HCT116 (cell line): ENCODE measurements at regions of chr12 and their contacts with region 1.

Region 1: GRCh38 chr12:72017054-72017651 is 78.5 kb downstream of the TPH2 start:
- DNase-seq: peak; percentile 85
- ATAC-seq: peak; percentile 98
- H3K4me3 ChIP-seq: no peak overlapping the region
- H3K27ac ChIP-seq: no peak overlapping the region
- H3K4me1 ChIP-seq: no peaks in the 10 kb centered on the region
- H3K27me3 ChIP-seq: no peaks in the 10 kb centered on the region
- CTCF ChIP-seq: peak; percentile 62 to 82 (median 80)
- POLR2A ChIP-seq: no peak
- RAD21 ChIP-seq: peak; percentile 86

Region 2: GRCh38 chr12:72063073-72063472 is 45.9 kb after region 1 on chr12:
- CTCF ChIA-PET with region 1: no interaction called
- POLR2A ChIA-PET with region 1: no interaction called
- RAD21 ChIA-PET with region 1: no interaction called
- intact Hi-C with region 1: no loop called
- DNase-seq: no peak
- ATAC-seq: no peak
- H3K4me3 ChIP-seq: no peak overlapping the region
- H3K27ac ChIP-seq: no peak overlapping the region
- H3K4me1 ChIP-seq: no peaks in the 10 kb centered on the region
- H3K27me3 ChIP-seq: no peaks in the 10 kb centered on the region
- CTCF ChIP-seq: no peak
- POLR2A ChIP-seq: no peak
- RAD21 ChIP-seq: no peak

Region 3: GRCh38 chr12:72264548-72265175 is 247.5 kb after region 1 on chr12:
- CTCF ChIA-PET with region 1: interaction called, 9 read pairs
- POLR2A ChIA-PET with region 1: no interaction called
- RAD21 ChIA-PET with region 1: no interaction called
- intact Hi-C with region 1: loop called (anchors 5 kb)
- DNase-seq: no peak
- ATAC-seq: peak; percentile 64; the same call in 1 of the 2 replicates
- H3K4me3 ChIP-seq: no peak overlapping the region
- H3K27ac ChIP-seq: no peak overlapping the region
- H3K4me1 ChIP-seq: no peaks in the 10 kb centered on the region
- H3K27me3 ChIP-seq: no peaks in the 10 kb centered on the region
- CTCF ChIP-seq: peak; percentile 37 to 61 (median 57); a peak in 5 of 6 replicates
- POLR2A ChIP-seq: no peak
- RAD21 ChIP-seq: peak; percentile 55

Region 4: DNA sequence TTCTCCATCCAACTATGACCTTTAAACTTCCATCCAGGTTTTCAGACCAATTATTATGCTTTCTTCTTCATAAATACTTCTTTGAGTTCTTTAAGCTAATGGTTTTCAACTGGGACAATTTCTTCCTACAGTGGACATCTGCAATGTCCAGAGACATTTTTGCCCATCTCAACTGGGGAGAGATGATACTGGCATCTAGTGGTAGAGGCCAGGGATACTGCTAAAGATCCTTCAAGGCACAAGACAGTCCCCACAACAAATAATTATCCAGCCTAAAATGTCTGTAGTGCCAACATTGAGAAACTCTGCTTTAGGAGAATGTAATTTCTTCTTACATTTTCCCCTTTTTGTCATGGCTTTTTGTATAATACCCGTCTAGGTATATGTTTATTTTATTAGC is 265.6 kb after region 1 on chr12:
- CTCF ChIA-PET with region 1: interaction called, 12 read pairs
- POLR2A ChIA-PET with region 1: no interaction called
- RAD21 ChIA-PET with region 1: no interaction called
- intact Hi-C with region 1: loop called (anchors 5 kb)
- DNase-seq: no peak
- ATAC-seq: peak; percentile 88
- H3K4me3 ChIP-seq: no peak overlapping the region
- H3K27ac ChIP-seq: no peak overlapping the region
- H3K4me1 ChIP-seq: no peaks in the 10 kb centered on the region
- H3K27me3 ChIP-seq: no peaks in the 10 kb centered on the region
- CTCF ChIP-seq: peak; percentile 51 to 82 (median 73); a peak in 5 of 6 replicates
- POLR2A ChIP-seq: no peak
- RAD21 ChIP-seq: peak; percentile 66